CD14-positive monocyte (primary cell): ENCODE measurements at regions of chr1 and their contacts with region 1.

Region 1: GRCh38 chr1:17405898-17406759 is 33.3 kb downstream of the RCC2 start:
- DNase-seq: peak; percentile 50 to 67 (median 51)
- H3K4me3 ChIP-seq: no peak overlapping the region
- H3K4me3 Mint-ChIP-seq: no peak overlapping the region
- H3K27ac ChIP-seq: no peak overlapping the region
- H3K27ac Mint-ChIP-seq: no peak overlapping the region
- H3K4me1 ChIP-seq: peaks cover 0 to 5% of the 10 kb centered on the region in 2 donors
- H3K4me1 Mint-ChIP-seq: peaks cover 7% of the 10 kb centered on the region
- H3K27me3 ChIP-seq: no peaks in the 10 kb centered on the region
- H3K27me3 Mint-ChIP-seq: peaks cover 0 to 2% (median 0%) of the 10 kb centered on the region in 3 donors
- CTCF ChIP-seq: peak; percentile 86

Region 2: GRCh38 chr1:17244816-17245740 is 161.1 kb before region 1 on chr1:
- intact Hi-C with region 1: loop called in 1 of 2 experiments (anchors 10 kb)
- DNase-seq: no peak
- H3K4me3 ChIP-seq: no peak overlapping the region
- H3K4me3 Mint-ChIP-seq: no peak overlapping the region
- H3K27ac ChIP-seq: no peak overlapping the region
- H3K27ac Mint-ChIP-seq: no peak overlapping the region
- H3K4me1 ChIP-seq: peaks cover 0 to 7% of the 10 kb centered on the region in 2 donors
- H3K4me1 Mint-ChIP-seq: peaks cover 3% of the 10 kb centered on the region
- H3K27me3 ChIP-seq: no peaks in the 10 kb centered on the region
- H3K27me3 Mint-ChIP-seq: peaks cover 9 to 10% (median 9%) of the 10 kb centered on the region in 3 donors
- CTCF ChIP-seq: no peak

Region 3: DNA sequence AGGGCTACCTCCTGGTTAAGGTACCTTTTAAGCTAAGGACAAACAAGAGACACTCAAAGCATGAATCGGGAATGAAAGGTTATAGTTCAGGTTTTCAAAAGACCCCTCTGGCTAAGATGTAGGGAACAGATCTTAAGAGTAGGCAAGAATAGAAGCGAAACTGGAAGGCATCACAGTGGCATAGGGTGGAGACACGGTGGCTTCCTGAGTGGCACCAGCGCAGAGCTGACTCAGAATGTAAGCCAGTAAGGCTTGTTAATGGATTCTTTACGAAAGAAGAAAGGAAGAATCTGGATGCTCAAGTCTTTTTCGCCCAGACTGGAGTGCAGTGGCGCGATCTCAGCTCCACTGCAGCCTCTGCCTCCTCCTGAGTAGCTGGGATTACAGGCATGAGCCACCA is 12.9 kb before region 1 on chr1:
- intact Hi-C with region 1: no loop called
- DNase-seq: peak; percentile 21 to 73 (median 54)
- H3K4me3 ChIP-seq: peak overlapping the region in 1 of 3 experiments; percentile 28
- H3K4me3 Mint-ChIP-seq: peak overlapping the region in 1 of 2 donors; percentile 67
- H3K27ac ChIP-seq: peak overlapping the region in 1 of 2 donors; percentile 84
- H3K27ac Mint-ChIP-seq: peak overlapping the region in 5 of 7 donors; percentile 6 to 94 (median 87)
- H3K4me1 ChIP-seq: peaks cover 17 to 41% of the 10 kb centered on the region in 2 donors
- H3K4me1 Mint-ChIP-seq: peaks cover 21% of the 10 kb centered on the region
- H3K27me3 ChIP-seq: no peaks in the 10 kb centered on the region
- H3K27me3 Mint-ChIP-seq: peaks cover 3 to 12% (median 3%) of the 10 kb centered on the region in 3 donors
- CTCF ChIP-seq: no peak

Region 4: DNA sequence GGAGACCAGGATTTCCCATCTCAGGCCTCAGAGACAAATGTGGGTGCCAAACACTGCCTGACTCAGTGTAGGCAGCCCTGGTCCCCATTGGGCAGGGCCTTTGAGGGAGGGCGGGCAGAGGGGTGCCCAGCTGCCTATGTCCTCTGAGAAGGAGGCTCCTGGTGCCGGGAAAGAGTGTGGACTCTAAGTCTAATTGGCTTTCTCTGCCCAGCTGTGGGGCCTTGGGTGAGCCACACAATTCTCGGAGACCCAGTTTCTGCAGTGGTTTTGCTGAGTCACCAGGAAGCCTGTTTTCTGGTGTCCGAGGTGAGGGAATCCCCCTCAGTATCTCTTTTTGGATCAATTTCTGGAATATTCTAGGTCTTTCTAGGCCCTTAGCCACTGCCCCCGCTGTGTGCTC is 313.7 kb after region 1 on chr1:
- intact Hi-C with region 1: no loop called
- DNase-seq: no peak
- H3K4me3 ChIP-seq: no peak overlapping the region
- H3K4me3 Mint-ChIP-seq: no peak overlapping the region
- H3K27ac ChIP-seq: no peak overlapping the region
- H3K27ac Mint-ChIP-seq: no peak overlapping the region
- H3K4me1 ChIP-seq: no peaks in the 10 kb centered on the region
- H3K4me1 Mint-ChIP-seq: no peaks in the 10 kb centered on the region
- H3K27me3 ChIP-seq: no peaks in the 10 kb centered on the region
- H3K27me3 Mint-ChIP-seq: peaks cover 13 to 20% (median 15%) of the 10 kb centered on the region in 3 donors
- CTCF ChIP-seq: no peak